ENCODE measurements at regions of chr5 and their contacts with region 1.

Region 1: GRCh38 chr5:157948738-157949410 is 89.9 kb upstream of the CLINT1 start:
- DNase-seq: peak; percentile 71 to 92
- ATAC-seq: peak; percentile 99 to 100
- H3K4me3 ChIP-seq: peak overlapping the region; percentile 23; the same call in 2 of the 3 replicates
- H3K27ac ChIP-seq: peak overlapping the region; percentile 50 to 76
- H3K4me1 ChIP-seq: peaks cover 5% of the 10 kb centered on the region
- CTCF ChIP-seq: peak; percentile 85
- EP300 ChIP-seq: no peak
- POLR2A ChIP-seq: no peak
- RAD21 ChIP-seq: peak; percentile 77 to 80

Region 2: DNA sequence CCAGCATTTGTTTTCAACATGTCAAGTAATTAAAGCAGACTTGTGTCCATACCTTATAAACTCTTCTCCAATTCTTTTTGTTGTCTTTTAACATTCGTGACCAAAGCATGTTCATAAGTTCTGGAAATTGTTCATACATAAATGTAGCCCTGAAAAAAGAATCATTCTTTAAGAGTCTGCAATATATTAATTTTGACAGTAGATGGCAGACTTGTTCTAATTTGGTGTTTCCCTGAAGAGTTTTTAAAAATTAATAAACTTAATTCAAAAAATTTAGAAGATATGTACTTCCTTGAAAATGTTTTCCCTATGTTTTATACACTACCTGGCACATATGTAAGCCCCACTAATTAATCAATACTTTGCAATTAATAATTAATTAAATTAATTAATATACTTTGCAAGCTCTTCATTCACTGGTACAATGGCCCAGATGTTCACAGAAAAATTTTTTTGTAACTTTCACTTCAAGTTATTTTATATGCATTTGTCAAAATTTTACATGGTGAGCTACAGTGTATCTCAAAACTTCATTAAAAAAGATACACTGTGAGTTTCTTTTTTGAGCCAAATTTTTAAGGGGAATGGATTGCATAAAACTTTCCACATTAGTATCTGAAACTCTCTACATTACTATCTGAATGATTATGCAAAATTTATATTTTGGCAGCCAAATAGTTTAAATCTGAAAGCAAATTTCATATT is 132.0 kb before region 1 on chr5:
- CTCF ChIA-PET with region 1: interaction called, 25 read pairs
- POLR2A ChIA-PET with region 1: no interaction called
- DNase-seq: peak in 1 of 2 experiments; percentile 18
- ATAC-seq: no peak
- H3K4me3 ChIP-seq: no peak overlapping the region
- H3K27ac ChIP-seq: no peak overlapping the region
- H3K4me1 ChIP-seq: peaks cover 18% of the 10 kb centered on the region
- CTCF ChIP-seq: peak; percentile 71
- EP300 ChIP-seq: no peak
- POLR2A ChIP-seq: no peak
- RAD21 ChIP-seq: peak; percentile 63 to 82

Region 3: DNA sequence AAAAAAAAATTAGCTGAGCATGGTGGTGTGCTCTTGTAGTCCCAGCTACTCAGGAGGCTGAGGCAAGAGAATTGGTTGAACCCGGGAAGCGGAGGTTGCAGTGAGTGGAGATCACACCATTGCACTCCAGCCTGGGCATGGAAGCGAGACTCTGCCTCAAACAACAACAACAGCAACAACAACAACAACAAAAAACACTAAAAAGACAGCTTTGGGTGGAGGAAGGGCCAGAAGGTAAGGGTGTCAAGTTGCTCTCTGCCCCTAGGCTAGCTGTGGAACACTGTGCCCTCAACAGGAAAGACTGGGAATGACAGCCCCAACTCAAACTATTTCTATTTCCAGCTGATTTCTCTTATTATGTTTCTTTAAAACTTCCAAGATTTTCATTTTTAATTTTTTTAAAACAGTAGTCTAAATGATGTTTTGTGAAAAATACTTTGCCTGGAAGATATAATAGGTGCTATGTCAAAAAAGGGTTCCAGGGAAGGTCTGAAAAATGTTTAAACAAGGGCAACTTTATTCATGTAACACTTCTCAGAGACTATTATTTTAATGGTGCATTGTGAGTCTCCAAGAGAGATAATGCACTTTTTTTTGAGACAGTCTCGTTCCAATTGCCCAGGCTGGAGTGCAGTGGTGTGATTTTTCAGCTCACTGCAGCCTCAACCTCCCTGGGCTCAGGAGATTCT is 119.8 kb before region 1 on chr5:
- CTCF ChIA-PET with region 1: interaction called, 12 read pairs
- POLR2A ChIA-PET with region 1: no interaction called
- DNase-seq: peak; percentile 13 to 19
- ATAC-seq: peak; percentile 73 to 81; a peak in 4 of 6 replicates
- H3K4me3 ChIP-seq: no peak overlapping the region
- H3K27ac ChIP-seq: no peak overlapping the region
- H3K4me1 ChIP-seq: peaks cover 12% of the 10 kb centered on the region; the same call in 1 of the 3 replicates
- CTCF ChIP-seq: peak; percentile 11; the same call in 2 of the 3 replicates
- EP300 ChIP-seq: no peak
- POLR2A ChIP-seq: no peak
- RAD21 ChIP-seq: no peak

Region 4: GRCh38 chr5:157930710-157931109 is 18.2 kb before region 1 on chr5:
- CTCF ChIA-PET with region 1: interaction called, 51 read pairs
- POLR2A ChIA-PET with region 1: no interaction called
- DNase-seq: no peak
- ATAC-seq: no peak
- H3K4me3 ChIP-seq: no peak overlapping the region
- H3K27ac ChIP-seq: no peak overlapping the region
- H3K4me1 ChIP-seq: peaks cover under 1% of the 10 kb centered on the region; the same call in 1 of the 3 replicates
- CTCF ChIP-seq: no peak
- EP300 ChIP-seq: no peak
- POLR2A ChIP-seq: no peak
- RAD21 ChIP-seq: no peak